Activated CD8-positive, alpha-beta memory T cell treated with anti-CD3 and anti-CD28 coated beads, Interleukin-2, amount 10 ng/mL, durations not matched to agents 7 days and 5 days (primary cell): ENCODE measurements at regions of chr12 and their contacts with region 1.

Region 1: GRCh38 chr12:57487597-57488401 is at the start of gene MARS1:
- DNase-seq: peak; percentile 97
- ATAC-seq: peak; percentile 97
- H3K4me3 Mint-ChIP-seq: peak within 1 kb of the TSS; percentile 93
- H3K27ac Mint-ChIP-seq: peak within 1 kb of the TSS; percentile 89
- H3K4me1 Mint-ChIP-seq: peaks cover 39% of the 10 kb centered on the region
- H3K27me3 Mint-ChIP-seq: no peaks in the 10 kb centered on the region
- total RNA-seq, gene MARS1: 283 to 384 TPM

Region 2: DNA sequence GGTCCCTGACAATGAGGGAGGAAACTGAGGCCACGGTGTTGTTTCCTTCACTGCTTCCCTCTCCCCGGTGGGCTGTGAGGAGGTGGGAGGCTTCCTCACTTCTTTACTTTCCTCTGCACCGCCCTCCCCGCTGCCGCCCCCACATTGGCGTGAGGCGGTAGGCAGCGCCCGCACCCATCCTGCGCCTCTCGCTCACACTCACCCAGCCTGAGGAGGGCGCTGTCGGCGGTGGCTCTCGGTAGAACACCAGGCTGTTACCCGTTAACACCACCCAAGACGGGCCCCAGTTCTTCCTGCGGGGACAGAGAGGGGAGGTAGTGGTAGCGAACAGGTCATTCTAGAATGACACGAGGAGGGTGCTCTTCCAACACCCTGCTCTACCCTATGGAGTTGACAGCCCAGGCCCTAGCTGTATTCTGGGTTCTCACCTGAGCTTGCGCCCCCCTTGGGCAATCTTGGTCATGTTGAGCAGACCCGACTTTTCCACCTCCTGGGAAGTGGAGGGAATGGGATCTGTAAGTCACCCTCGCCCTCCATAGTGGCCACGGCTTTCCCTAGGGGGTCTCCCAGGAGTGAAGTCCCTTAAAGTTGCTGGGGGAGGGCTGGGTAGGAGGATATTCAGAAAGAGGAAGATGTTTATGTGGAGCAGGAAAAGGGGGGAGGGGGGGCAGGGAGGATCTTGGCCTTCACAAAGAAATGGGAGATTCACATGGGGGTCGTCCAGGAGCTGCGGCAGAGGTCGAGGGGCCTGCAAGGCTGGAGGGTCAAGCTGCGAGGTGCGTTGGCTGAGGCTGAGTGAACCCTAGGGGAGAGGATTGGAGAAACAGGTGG is 11.4 kb before region 1 on chr12:
- CTCF ChIA-PET with region 1: interaction called, 12 read pairs
- DNase-seq: peak; percentile 89
- ATAC-seq: peak; percentile 25
- H3K4me3 Mint-ChIP-seq: peak overlapping the region; percentile 89
- H3K27ac Mint-ChIP-seq: peak overlapping the region; percentile 100
- H3K4me1 Mint-ChIP-seq: peaks cover 62% of the 10 kb centered on the region
- H3K27me3 Mint-ChIP-seq: no peaks in the 10 kb centered on the region

Region 3: DNA sequence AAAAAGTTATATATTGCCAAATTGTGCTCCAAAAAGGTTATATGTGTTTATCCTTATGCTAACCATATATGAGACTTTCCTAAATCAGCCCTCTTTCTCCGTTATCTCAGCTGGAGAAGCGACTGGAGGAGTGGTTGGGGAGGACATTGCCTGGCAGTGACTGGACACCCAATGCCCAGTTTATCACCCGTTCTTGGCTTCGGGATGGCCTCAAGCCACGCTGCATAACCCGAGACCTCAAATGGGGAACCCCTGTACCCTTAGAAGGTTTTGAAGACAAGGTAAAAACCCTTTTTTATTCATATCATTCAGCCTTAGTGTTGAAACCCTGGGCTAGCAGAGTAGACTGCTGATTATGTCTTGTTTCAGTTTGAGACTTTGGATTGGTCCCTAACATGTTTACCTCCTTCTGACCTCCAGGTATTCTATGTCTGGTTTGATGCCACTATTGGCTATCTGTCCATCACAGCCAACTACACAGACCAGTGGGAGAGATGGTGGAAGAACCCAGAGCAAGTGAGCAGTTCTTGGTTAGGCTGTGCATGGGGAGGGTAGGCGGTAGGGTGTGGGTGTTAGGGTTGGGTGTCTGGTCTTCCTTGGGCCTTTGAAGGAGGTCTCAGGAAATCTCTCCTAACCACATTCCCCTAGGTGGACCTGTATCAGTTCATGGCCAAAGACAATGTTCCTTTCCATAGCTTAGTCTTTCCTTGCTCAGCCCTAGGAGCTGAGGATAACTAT is 24.0 kb after region 1 on chr12:
- CTCF ChIA-PET with region 1: no interaction called
- DNase-seq: no peak
- ATAC-seq: no peak
- H3K4me3 Mint-ChIP-seq: no peak overlapping the region
- H3K27ac Mint-ChIP-seq: no peak overlapping the region
- H3K4me1 Mint-ChIP-seq: peaks cover 3% of the 10 kb centered on the region
- H3K27me3 Mint-ChIP-seq: no peaks in the 10 kb centered on the region

Region 4: DNA sequence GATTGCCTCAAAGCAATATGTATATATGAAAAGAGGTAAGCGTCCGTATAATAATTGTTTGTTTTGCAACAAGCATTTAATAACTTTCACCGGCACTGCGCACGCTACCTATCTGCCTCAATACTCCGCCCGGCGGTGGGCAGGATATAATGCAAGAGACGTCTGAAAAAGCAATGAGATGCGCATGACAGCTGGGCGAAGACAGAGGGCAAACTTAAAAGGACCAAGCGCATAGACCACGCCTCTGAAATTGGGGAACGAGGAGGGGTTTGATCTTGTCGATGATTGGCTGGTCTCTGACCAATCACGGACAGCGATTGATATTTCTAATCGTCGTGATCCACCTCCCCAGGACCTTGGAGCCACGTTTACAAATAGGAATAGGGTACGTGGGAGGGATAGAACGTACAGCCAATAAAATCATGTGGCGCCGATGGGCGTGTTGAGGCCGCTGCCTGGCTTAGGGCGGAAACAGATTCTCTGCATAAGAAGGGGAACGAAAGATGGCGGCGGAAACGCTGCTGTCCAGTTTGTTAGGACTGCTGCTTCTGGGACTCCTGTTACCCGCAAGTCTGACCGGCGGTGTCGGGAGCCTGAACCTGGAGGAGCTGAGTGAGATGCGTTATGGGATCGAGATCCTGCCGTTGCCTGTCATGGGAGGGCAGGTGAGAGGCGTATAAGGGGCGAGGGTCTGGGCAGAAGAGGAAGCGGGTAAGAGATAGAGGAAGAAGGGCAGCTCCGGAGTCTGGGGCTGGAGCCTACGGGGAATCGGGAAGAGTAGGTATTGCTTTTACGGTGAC is 206.1 kb after region 1 on chr12 and contains the start of gene OS9:
- CTCF ChIA-PET with region 1: no interaction called
- DNase-seq: peak; percentile 99
- ATAC-seq: peak; percentile 99
- H3K4me3 Mint-ChIP-seq: no peak within 1 kb of the TSS
- H3K27ac Mint-ChIP-seq: no peak within 1 kb of the TSS
- H3K4me1 Mint-ChIP-seq: peaks cover 3% of the 10 kb centered on the region
- H3K27me3 Mint-ChIP-seq: peaks cover 15% of the 10 kb centered on the region
- total RNA-seq, gene OS9: 117 to 123 TPM